Activated T-helper 2 cell treated with anti-CD3 and anti-CD28 coated beads, Interferon-gamma antibody, Interleukin-2, Interleukin-4, amounts not matched to agents 10 μg/mL and 5 μg/mL and 100 μg/mL, durations not matched to agents 14 hours and 24 hours and 36 hours (primary cell): ENCODE measurements at regions of chr4 and their contacts with region 1.

Region 1: DNA sequence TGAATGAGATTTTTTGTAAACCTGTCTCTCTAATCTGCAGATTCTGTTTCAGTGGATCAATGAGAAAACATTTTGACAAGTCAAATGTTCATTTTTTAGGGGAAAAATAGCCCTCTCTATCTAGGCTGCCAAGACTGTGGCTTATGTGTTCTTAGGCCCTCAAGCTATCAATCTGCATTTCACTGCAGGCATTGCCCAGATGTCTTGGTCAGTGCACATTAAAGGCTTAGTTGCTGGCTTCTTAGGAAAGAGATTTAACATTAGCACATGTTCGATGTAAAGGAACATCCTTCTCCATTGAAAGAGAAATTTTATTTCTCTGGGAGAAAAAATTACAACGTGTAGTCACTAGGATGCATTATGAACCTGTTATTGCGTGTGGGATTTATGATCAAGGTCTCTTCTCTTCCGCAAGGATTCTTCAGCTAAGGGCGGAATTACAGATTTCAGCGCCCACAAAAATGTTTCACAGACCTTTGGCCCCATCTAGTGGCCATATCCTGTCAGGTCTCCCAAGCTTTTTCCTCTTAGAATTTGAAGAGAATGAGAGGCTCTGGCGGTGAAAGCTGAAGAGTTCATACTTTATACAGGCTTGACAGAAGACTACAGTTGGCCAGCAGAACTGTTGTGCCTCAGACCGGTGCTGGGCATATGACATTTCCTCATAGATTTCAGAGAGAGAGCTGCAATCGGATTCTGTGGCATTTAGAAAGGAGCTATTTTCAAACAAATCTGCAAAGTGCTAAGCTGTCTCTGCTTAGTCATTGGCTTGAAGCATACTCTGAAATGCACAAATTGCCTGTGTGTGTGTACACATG is 144.6 kb upstream of the NOCT start:
- DNase-seq: no peak
- H3K4me3 Mint-ChIP-seq: no peak overlapping the region
- H3K27ac Mint-ChIP-seq: no peak overlapping the region
- H3K4me1 Mint-ChIP-seq: no peaks in the 10 kb centered on the region
- H3K27me3 Mint-ChIP-seq: peaks cover 5% of the 10 kb centered on the region

Region 2: DNA sequence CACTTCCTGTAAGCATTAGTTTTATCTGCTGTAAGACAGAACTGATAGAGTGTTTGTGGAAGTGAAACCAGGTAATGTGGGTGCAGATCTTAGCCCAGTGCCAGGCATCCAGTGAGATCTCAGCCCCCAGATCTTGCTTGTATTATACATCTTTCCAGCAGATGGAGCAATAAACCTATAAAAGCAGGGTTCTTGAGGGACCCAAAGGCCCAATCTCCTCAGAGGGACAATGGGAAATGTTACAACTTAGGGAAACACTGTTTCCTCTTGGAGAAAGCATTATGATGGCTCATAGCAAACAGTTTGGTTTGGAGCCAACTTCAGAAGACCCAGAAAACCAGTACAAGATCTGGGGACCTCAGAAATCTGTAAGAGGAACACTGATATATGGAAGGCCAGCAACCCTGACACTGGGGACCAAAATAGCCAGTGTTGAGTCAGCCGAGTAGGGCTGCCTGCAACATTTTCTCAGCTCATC is 835.1 kb before region 1 on chr4:
- intact Hi-C with region 1: loop called (anchors 10 kb)
- DNase-seq: no peak
- H3K4me3 Mint-ChIP-seq: no peak overlapping the region
- H3K27ac Mint-ChIP-seq: no peak overlapping the region
- H3K4me1 Mint-ChIP-seq: no peaks in the 10 kb centered on the region
- H3K27me3 Mint-ChIP-seq: no peaks in the 10 kb centered on the region

Region 3: GRCh38 chr4:138279286-138279685 is 591.7 kb before region 1 on chr4:
- intact Hi-C with region 1: no loop called
- DNase-seq: no peak
- H3K4me3 Mint-ChIP-seq: no peak overlapping the region
- H3K27ac Mint-ChIP-seq: no peak overlapping the region
- H3K4me1 Mint-ChIP-seq: no peaks in the 10 kb centered on the region
- H3K27me3 Mint-ChIP-seq: no peaks in the 10 kb centered on the region